ENCODE measurements at regions of chr1 and their contacts with region 1.

Region 1: GRCh38 chr1:185317034-185317885 is at the start of gene IVNS1ABP:
- DNase-seq: peak; percentile 78
- ATAC-seq: peak; percentile 68
- H3K4me3 ChIP-seq: peak within 1 kb of the TSS; percentile 98
- H3K27ac ChIP-seq: peak within 1 kb of the TSS; percentile 62
- H3K4me1 ChIP-seq: peaks cover 30% of the 10 kb centered on the region
- H3K27me3 ChIP-seq: no peaks in the 10 kb centered on the region
- CTCF ChIP-seq: peak; percentile 32; the same call in 1 of the 2 replicates
- total RNA-seq, gene IVNS1ABP: 21.0 and 30.7 TPM in 2 replicates

Region 2: GRCh38 chr1:185244015-185244747 is 73.1 kb before region 1 on chr1:
- CTCF ChIA-PET with region 1: interaction called, 5 read pairs
- POLR2A ChIA-PET with region 1: interaction called, 3 read pairs
- intact Hi-C with region 1: loop called (anchors 5 kb)
- DNase-seq: peak; percentile 77
- ATAC-seq: peak; percentile 100
- H3K4me3 ChIP-seq: no peak overlapping the region
- H3K27ac ChIP-seq: peak overlapping the region; percentile 50; the same call in 1 of the 2 replicates
- H3K4me1 ChIP-seq: peaks cover 9% of the 10 kb centered on the region
- H3K27me3 ChIP-seq: no peaks in the 10 kb centered on the region
- CTCF ChIP-seq: no peak

Region 3: DNA sequence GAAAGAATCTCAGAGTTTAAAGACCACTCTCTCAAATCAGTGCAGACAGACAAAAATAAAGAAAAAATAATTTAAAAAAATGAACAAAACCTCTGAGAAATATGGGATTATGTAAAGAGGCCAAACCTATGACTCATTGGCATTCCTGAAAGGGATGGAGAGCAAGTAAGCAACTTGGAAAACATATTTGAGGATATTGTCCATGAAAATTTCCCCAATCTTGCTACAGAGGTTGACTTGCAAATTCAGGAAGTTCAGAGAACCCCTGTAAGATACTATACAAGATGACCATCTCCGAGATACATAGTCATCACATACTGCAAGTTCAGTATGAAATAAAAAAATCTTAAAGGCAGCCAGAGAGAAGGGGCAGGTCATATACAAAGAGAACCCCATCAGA is 43.5 kb after region 1 on chr1:
- CTCF ChIA-PET with region 1: no interaction called
- POLR2A ChIA-PET with region 1: interaction called, 10 read pairs
- intact Hi-C with region 1: no loop called
- DNase-seq: peak; percentile 37
- ATAC-seq: no peak; the same call in 1 of the 2 replicates
- H3K4me3 ChIP-seq: no peak overlapping the region
- H3K27ac ChIP-seq: no peak overlapping the region
- H3K4me1 ChIP-seq: no peaks in the 10 kb centered on the region
- H3K27me3 ChIP-seq: no peaks in the 10 kb centered on the region
- CTCF ChIP-seq: no peak

Region 4: DNA sequence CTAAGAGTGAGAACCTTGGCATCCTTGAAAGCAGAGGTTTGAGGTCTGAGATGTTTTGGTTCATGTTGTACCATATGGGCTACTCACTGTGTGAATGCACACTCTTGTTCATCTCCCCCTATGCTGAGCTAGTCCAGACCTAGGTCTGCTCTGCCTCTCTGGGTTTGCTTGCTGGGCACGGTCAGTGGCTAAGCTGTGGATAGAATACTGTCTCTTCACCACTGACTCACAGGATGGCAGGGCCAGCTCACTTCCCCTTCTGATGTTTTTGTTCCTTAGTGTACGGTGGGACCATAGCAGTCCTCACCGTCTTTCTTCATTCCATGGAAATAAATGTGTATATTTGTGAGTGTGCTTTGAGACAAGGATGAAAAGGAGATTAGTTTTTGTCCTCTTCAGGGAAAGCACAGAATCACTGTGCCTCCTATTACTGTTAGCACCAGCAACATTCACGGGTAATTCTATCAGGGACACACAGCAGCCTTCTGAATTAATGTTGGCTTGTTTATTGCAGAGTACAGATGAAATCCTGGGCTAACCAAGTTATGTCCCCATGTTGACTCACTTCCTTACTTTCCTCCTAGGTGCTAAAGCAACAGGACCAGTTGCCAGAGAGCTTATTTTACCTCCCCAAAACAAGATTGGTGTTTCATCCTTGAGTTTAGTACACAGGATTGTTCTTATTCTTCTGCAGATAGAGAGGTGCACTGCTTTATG is 56.7 kb after region 1 on chr1:
- CTCF ChIA-PET with region 1: interaction called, 3 read pairs
- POLR2A ChIA-PET with region 1: no interaction called
- intact Hi-C with region 1: loop called (anchors 2 kb)
- DNase-seq: peak; percentile 69
- ATAC-seq: peak; percentile 90
- H3K4me3 ChIP-seq: peak overlapping the region; percentile 53
- H3K27ac ChIP-seq: peak overlapping the region; percentile 95
- H3K4me1 ChIP-seq: peaks cover 48% of the 10 kb centered on the region
- H3K27me3 ChIP-seq: no peaks in the 10 kb centered on the region
- CTCF ChIP-seq: no peak

Region 5: GRCh38 chr1:185559684-185560331 is 242.5 kb after region 1 on chr1:
- CTCF ChIA-PET with region 1: no interaction called
- POLR2A ChIA-PET with region 1: no interaction called
- intact Hi-C with region 1: loop called (anchors 10 kb)
- DNase-seq: peak; percentile 53
- ATAC-seq: peak; percentile 76
- H3K4me3 ChIP-seq: no peak overlapping the region
- H3K27ac ChIP-seq: no peak overlapping the region
- H3K4me1 ChIP-seq: peaks cover 19% of the 10 kb centered on the region
- H3K27me3 ChIP-seq: no peaks in the 10 kb centered on the region
- CTCF ChIP-seq: peak; percentile 47

Region 6: GRCh38 chr1:185581961-185582725 is 264.9 kb after region 1 on chr1:
- CTCF ChIA-PET with region 1: no interaction called
- POLR2A ChIA-PET with region 1: no interaction called
- intact Hi-C with region 1: no loop called
- DNase-seq: peak; percentile 32
- ATAC-seq: no peak; the same call in 1 of the 2 replicates
- H3K4me3 ChIP-seq: no peak overlapping the region
- H3K27ac ChIP-seq: no peak overlapping the region
- H3K4me1 ChIP-seq: peaks cover 11% of the 10 kb centered on the region
- H3K27me3 ChIP-seq: no peaks in the 10 kb centered on the region
- CTCF ChIP-seq: no peak

Region 7: DNA sequence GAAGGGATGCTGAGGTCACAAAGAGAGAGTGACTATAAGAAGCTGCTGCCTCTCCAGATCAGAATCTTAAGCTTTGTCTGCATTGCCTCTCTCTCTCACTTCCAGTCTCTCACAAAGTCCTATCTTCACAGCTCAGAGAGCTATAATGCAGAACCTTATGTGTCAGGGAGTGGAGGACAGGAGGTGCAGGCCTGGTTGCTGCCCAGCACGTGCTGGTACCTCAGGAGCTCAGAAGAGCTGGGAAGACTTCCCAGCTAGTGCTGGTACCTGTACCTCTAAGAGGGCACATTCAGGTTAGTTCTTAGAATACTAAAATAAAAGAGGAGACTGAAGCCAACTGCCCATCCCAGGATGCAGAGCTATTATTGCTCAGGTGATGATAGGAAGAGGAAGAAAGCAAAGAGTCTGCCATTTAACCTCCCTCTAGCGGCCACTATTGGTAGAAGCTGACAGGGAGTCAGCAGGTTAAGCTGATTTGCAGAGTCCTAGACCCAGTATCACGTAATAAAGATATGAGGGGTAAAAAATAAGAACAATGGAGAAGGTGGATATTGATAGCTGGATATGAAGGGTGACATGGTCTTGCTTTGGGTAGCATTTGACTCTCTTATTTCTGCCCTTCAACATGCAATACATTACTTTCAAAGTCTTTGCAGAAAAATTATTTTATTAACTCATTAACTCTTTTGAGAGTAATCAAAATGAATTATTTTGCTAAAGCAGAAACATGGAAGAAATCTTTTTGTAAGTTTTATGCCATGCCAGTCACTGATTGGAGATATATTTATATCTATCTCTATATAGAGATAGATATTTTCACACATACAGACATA is 278.8 kb after region 1 on chr1:
- CTCF ChIA-PET with region 1: interaction called, 6 read pairs
- POLR2A ChIA-PET with region 1: no interaction called
- intact Hi-C with region 1: loop called (anchors 5 kb)
- DNase-seq: peak; percentile 64
- ATAC-seq: peak; percentile 60
- H3K4me3 ChIP-seq: no peak overlapping the region
- H3K27ac ChIP-seq: no peak overlapping the region
- H3K4me1 ChIP-seq: peaks cover 4% of the 10 kb centered on the region; the same call in 1 of the 2 replicates
- H3K27me3 ChIP-seq: no peaks in the 10 kb centered on the region
- CTCF ChIP-seq: peak; percentile 78

Region 8: GRCh38 chr1:185670187-185670627 is 352.9 kb after region 1 on chr1:
- CTCF ChIA-PET with region 1: no interaction called
- POLR2A ChIA-PET with region 1: interaction called, 3 read pairs
- intact Hi-C with region 1: loop called (anchors 5 kb)
- DNase-seq: peak; percentile 54
- ATAC-seq: 0 out of 2 replicates have a peak, but pooled peaks have one; percentile 35
- H3K4me3 ChIP-seq: no peak overlapping the region
- H3K27ac ChIP-seq: no peak overlapping the region
- H3K4me1 ChIP-seq: peaks cover 6% of the 10 kb centered on the region; the same call in 1 of the 2 replicates
- H3K27me3 ChIP-seq: no peaks in the 10 kb centered on the region
- CTCF ChIP-seq: peak; percentile 68

Measured in PC-3 (cell line).